Activated CD4-positive, alpha-beta T cell treated with anti-CD3 and anti-CD28 coated beads for 36 hours (primary cell): ENCODE measurements at regions of chr7 and their contacts with region 1.

Region 1: GRCh38 chr7:5822742-5823503 is 41.5 kb upstream of the RNF216 start:
- DNase-seq: peak; percentile 99
- ATAC-seq: peak; percentile 94
- H3K4me3 Mint-ChIP-seq: peak overlapping the region; percentile 74
- H3K27ac Mint-ChIP-seq: peak overlapping the region; percentile 89
- H3K4me1 Mint-ChIP-seq: peaks cover 29% of the 10 kb centered on the region
- H3K27me3 Mint-ChIP-seq: no peaks in the 10 kb centered on the region

Region 2: DNA sequence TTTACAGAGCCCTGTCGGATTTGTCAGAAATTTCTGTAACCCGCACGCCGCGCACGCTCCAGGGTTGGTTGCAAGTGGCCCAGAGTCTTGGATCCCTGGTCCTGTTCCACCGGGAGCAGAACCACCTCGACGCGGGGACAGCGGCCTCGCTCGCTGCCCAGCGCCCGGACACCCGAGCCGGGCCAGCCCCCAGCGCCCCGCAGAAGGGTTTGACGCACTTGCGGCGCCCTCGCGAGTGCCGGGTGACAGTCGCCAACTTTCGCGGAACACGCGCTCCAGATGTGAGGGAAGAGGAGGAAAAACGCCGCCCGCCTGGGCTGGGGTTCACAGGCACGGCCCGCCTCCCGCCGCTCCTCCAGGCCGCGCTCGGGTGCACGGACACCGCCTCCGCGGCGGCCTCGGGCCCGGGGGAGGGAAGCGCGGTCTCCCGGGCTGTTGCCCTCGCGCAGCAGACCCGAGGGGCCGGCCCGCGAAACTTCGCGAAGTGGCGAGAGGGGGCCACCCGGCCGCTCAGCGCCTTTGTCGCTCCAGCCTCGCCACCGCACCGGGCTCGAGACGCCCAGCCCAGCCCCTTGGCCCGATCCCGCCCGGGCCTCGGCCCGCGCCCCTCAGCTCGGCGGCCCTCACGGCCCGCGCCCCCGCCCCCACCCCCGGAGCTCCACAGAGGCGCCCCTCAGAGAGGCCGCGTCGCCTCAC is 42.0 kb before region 1 on chr7:
- CTCF ChIA-PET with region 1: interaction called, 4 read pairs
- POLR2A ChIA-PET with region 1: no interaction called
- intact Hi-C with region 1: loop called (anchors 1 kb)
- DNase-seq: peak; percentile 61
- ATAC-seq: peak; percentile 19
- H3K4me3 Mint-ChIP-seq: peak overlapping the region; percentile 78
- H3K27ac Mint-ChIP-seq: peak overlapping the region; percentile 80
- H3K4me1 Mint-ChIP-seq: peaks cover 45% of the 10 kb centered on the region
- H3K27me3 Mint-ChIP-seq: no peaks in the 10 kb centered on the region